ENCODE measurements at regions of chr19 and their contacts with region 1.

Region 1: DNA sequence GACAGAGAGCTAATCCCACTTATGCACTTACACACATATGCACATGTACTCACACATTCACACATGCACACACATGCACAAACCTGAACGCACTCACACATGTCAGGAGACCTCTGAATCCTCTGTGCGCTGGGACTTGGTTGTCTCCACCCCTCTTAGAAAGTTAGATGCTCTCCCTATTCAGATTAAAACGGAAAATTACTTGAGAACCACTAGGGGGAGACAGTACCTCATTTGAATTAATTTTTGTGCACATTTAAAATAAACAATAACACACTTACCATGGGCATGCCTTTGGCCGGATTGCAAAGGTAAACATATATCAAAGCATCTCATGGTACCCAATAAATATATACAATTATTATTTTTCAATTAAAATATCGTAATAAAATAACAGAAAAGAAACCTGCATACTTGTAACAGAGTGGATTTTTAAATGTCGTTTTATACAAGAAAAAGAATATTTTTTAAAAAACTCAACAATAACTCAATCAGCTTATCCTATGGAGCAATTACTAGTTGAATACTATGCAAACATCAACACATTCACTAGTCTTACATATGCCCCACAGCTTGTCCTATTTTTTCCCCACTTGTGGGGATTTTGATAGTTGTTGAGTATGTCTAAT is 9.5 kb upstream of the LILRB4 start:
- DNase-seq: peak; percentile 52
- H3K4me3 ChIP-seq: no peak overlapping the region
- H3K27ac ChIP-seq: no peak overlapping the region
- H3K4me1 ChIP-seq: peaks cover 7% of the 10 kb centered on the region
- H3K27me3 ChIP-seq: no peaks in the 10 kb centered on the region
- CTCF ChIP-seq: peak; percentile 78

Region 2: GRCh38 chr19:54586397-54586796 is 66.9 kb before region 1 on chr19:
- CTCF ChIA-PET with region 1: no interaction called
- POLR2A ChIA-PET with region 1: no interaction called
- intact Hi-C with region 1: no loop called
- DNase-seq: no peak
- H3K4me3 ChIP-seq: no peak overlapping the region
- H3K27ac ChIP-seq: no peak overlapping the region
- H3K4me1 ChIP-seq: no peaks in the 10 kb centered on the region
- H3K27me3 ChIP-seq: peaks cover 26% of the 10 kb centered on the region
- CTCF ChIP-seq: no peak

Region 3: GRCh38 chr19:54916822-54917221 is 263.5 kb after region 1 on chr19:
- CTCF ChIA-PET with region 1: interaction called, 7 read pairs
- POLR2A ChIA-PET with region 1: no interaction called
- intact Hi-C with region 1: loop called (anchors 5 kb)
- DNase-seq: no peak
- H3K4me3 ChIP-seq: no peak overlapping the region
- H3K27ac ChIP-seq: no peak overlapping the region
- H3K4me1 ChIP-seq: no peaks in the 10 kb centered on the region
- H3K27me3 ChIP-seq: peaks cover 3% of the 10 kb centered on the region
- CTCF ChIP-seq: no peak

Measured in A673 (cell line).